Endothelial cell of umbilical vein (primary cell): ENCODE measurements at regions of chr2 and their contacts with region 1.

Region 1: GRCh38 chr2:20326163-20326780 is 24.4 kb downstream of the PUM2 start:
- DNase-seq: peak; percentile 72
- H3K4me3 ChIP-seq: no peak overlapping the region
- H3K27ac ChIP-seq: no peak overlapping the region
- H3K4me1 ChIP-seq: peaks cover 23% of the 10 kb centered on the region
- H3K27me3 ChIP-seq: no peaks in the 10 kb centered on the region
- CTCF ChIP-seq: peak; percentile 83 to 84
- POLR2A ChIP-seq: no peak

Region 2: GRCh38 chr2:19955544-19956422 is 370.5 kb before region 1 on chr2:
- CTCF ChIA-PET with region 1: interaction called, 11 read pairs
- POLR2A ChIA-PET with region 1: no interaction called
- dilution Hi-C with region 1: no loop called
- intact Hi-C with region 1: no loop called
- DNase-seq: peak; percentile 80
- H3K4me3 ChIP-seq: no peak overlapping the region
- H3K27ac ChIP-seq: no peak overlapping the region
- H3K4me1 ChIP-seq: no peaks in the 10 kb centered on the region
- H3K27me3 ChIP-seq: no peaks in the 10 kb centered on the region
- CTCF ChIP-seq: peak; percentile 80 to 85
- POLR2A ChIP-seq: no peak

Region 3: GRCh38 chr2:20135631-20136050 is 190.6 kb before region 1 on chr2:
- CTCF ChIA-PET with region 1: interaction called, 13 read pairs
- POLR2A ChIA-PET with region 1: no interaction called
- dilution Hi-C with region 1: no loop called
- intact Hi-C with region 1: loop called (anchors 10 kb)
- DNase-seq: peak; percentile 62
- H3K4me3 ChIP-seq: no peak overlapping the region
- H3K27ac ChIP-seq: no peak overlapping the region
- H3K4me1 ChIP-seq: peaks cover under 1% of the 10 kb centered on the region
- H3K27me3 ChIP-seq: peaks cover 0 to 4% of the 10 kb centered on the region in 2 experiments
- CTCF ChIP-seq: peak; percentile 76 to 91
- POLR2A ChIP-seq: no peak

Region 4: GRCh38 chr2:20291106-20291564 is 35.1 kb before region 1 on chr2:
- CTCF ChIA-PET with region 1: interaction called, 32 read pairs
- POLR2A ChIA-PET with region 1: interaction called, 4 read pairs
- dilution Hi-C with region 1: no loop called
- intact Hi-C with region 1: loop called (anchors 2 kb)
- DNase-seq: peak; percentile 83
- H3K4me3 ChIP-seq: no peak overlapping the region
- H3K27ac ChIP-seq: no peak overlapping the region
- H3K4me1 ChIP-seq: peaks cover 14% of the 10 kb centered on the region
- H3K27me3 ChIP-seq: no peaks in the 10 kb centered on the region
- CTCF ChIP-seq: peak; percentile 67 to 72
- POLR2A ChIP-seq: no peak

Region 5: DNA sequence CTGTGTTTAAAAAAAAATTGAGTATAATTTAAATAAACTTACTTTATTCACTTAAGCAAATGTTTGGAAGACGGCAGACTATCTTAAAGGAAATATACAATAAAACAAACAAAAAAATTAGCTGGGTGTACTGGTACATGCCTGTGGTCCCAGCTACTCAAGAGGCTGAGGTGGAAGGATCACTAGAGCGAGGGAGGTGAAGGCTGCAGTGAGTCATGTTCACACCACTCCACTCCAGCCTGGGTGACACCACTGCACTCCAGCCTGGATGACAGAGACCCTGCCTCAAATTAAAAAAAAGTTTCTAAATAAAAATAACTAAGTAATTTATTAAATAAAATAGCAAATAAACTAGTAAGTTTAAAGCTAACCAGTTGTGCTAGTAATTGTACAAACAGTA is 16.9 kb after region 1 on chr2:
- CTCF ChIA-PET with region 1: interaction called, 69 read pairs
- POLR2A ChIA-PET with region 1: interaction called, 5 read pairs
- dilution Hi-C with region 1: no loop called
- intact Hi-C with region 1: no loop called
- DNase-seq: no peak
- H3K4me3 ChIP-seq: no peak overlapping the region
- H3K27ac ChIP-seq: no peak overlapping the region
- H3K4me1 ChIP-seq: peaks cover 19% of the 10 kb centered on the region
- H3K27me3 ChIP-seq: no peaks in the 10 kb centered on the region
- CTCF ChIP-seq: no peak
- POLR2A ChIP-seq: no peak

Region 6: DNA sequence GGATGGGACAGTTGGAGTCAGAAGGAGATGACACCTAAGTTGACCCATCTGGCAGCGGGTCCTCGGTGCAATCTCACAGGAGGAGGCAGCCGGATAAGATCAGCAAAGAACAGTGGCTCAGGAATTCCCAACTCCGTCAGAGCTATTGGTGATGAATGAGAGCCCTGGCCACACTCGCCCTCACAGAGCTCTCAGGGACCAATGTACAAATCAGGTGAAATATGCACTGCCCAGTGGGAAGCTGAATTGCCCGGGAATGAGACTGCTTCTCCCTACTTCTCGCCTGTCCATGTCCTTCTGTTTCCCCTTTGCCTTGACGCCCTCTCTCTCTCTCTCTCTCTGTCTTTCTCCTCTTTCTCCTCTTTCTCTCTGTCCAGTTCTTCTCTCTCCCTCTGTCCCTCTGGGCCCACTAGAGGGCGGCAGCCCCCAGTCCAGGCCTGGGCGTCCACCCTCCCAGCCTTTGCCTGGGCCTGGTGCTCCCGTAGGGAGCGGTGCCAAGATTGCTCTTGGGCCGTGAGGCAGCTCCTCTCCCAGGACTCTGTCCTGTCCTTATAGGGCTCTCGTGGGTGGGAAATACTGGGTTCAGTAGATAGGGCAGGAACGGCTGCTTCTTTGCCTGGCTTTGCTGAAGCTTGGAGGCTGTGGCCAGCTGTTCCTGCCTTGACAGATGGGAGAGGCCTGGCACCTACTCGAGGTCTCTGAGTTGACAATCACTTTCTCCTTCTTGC is 52.7 kb after region 1 on chr2:
- CTCF ChIA-PET with region 1: interaction called, 6 read pairs
- POLR2A ChIA-PET with region 1: no interaction called
- dilution Hi-C with region 1: no loop called
- intact Hi-C with region 1: loop called (anchors 2 kb)
- DNase-seq: peak; percentile 78
- H3K4me3 ChIP-seq: no peak overlapping the region
- H3K27ac ChIP-seq: no peak overlapping the region
- H3K4me1 ChIP-seq: no peaks in the 10 kb centered on the region
- H3K27me3 ChIP-seq: peaks cover 6 to 9% of the 10 kb centered on the region in 2 experiments
- CTCF ChIP-seq: peak; percentile 87 to 89
- POLR2A ChIP-seq: no peak

Region 7: DNA sequence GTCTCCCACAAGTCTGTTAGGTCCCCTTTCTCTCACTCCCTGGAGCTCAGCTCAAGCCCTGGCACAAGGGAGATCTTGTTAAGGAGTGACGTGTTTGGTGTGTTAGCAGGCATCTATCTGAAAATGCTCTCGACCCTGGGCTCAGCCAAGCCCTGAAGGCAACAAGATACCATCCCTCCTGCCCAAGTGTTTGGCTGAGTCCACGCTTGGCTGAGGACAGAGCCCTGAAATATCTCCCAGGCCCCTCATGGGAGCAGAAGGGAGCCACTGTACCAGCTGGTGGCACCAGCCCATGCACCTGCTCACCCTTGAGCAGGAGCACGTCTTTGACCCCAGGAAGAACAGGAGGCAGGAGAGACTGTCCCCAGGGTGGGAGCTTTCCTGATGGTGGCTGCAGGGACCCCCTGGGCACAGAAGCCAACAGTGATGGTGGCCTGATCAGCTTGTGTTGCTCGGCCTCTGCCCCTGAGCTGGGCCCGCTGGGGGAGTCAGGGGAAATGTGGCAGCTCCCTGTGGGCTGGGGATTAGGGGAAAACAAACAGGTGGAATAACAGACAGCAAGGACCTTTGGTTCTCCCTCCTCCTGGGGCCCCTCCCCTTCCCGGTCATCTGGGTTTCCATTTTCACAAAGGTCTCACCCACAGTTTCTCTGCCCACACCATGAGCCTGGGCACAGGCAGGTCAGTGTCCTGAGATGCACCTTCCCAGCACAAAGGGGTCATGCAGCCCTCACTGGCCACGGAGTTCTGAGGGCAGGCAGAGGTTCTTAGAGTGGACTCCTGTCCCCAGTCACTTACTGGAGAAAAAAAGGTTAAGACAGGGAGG is 212.2 kb after region 1 on chr2:
- CTCF ChIA-PET with region 1: no interaction called
- POLR2A ChIA-PET with region 1: no interaction called
- dilution Hi-C with region 1: no loop called
- intact Hi-C with region 1: no loop called
- DNase-seq: no peak
- H3K4me3 ChIP-seq: no peak overlapping the region
- H3K27ac ChIP-seq: no peak overlapping the region
- H3K4me1 ChIP-seq: peaks cover 9% of the 10 kb centered on the region
- H3K27me3 ChIP-seq: no peaks in the 10 kb centered on the region
- CTCF ChIP-seq: no peak
- POLR2A ChIP-seq: no peak